ENCODE measurements at regions of chr17 and their contacts with region 1.

Region 1: GRCh38 chr17:13665872-13666635 is 64.3 kb upstream of the HS3ST3A1 start:
- DNase-seq: no peak
- H3K4me3 ChIP-seq: no peak overlapping the region
- H3K27me3 ChIP-seq: no peaks in the 10 kb centered on the region; the same call in 1 of the 2 replicates
- CTCF ChIP-seq: no peak

Region 2: GRCh38 chr17:13437966-13438779 is 227.9 kb before region 1 on chr17:
- CTCF ChIA-PET with region 1: no interaction called
- POLR2A ChIA-PET with region 1: no interaction called
- DNase-seq: no peak
- H3K4me3 ChIP-seq: no peak overlapping the region
- H3K27me3 ChIP-seq: no peaks in the 10 kb centered on the region
- CTCF ChIP-seq: no peak

Region 3: GRCh38 chr17:14098224-14098623 is 432.2 kb after region 1 on chr17:
- CTCF ChIA-PET with region 1: no interaction called
- POLR2A ChIA-PET with region 1: interaction called, 11 read pairs
- DNase-seq: no peak
- H3K4me3 ChIP-seq: no peak overlapping the region
- H3K27me3 ChIP-seq: no peaks in the 10 kb centered on the region
- CTCF ChIP-seq: no peak